HepG2 (cell line): ENCODE measurements at regions of chr9 and their contacts with region 1.

Region 1: GRCh38 chr9:32384364-32385151 is at the start of gene ACO1:
- DNase-seq: peak; percentile 80
- ATAC-seq: peak; percentile 94
- H3K4me3 ChIP-seq: peak within 1 kb of the TSS; percentile 79 to 98 (median 95)
- H3K27ac ChIP-seq: peak within 1 kb of the TSS; percentile 81
- H3K4me1 ChIP-seq: peaks cover 39% of the 10 kb centered on the region
- H3K27me3 ChIP-seq: no peaks in the 10 kb centered on the region; a peak in 1 of 5 replicates
- CTCF ChIP-seq: peak; percentile 55
- EP300 ChIP-seq: peak in 1 of 2 experiments; percentile 45; a peak in 1 of 4 replicates
- POLR2A ChIP-seq: peak; percentile 57 to 87; a peak in 3 of 4 replicates
- RAD21 ChIP-seq: peak; percentile 26; the same call in 1 of the 2 replicates
- total RNA-seq, gene ACO1: 48.2 and 68.9 TPM in 2 replicates

Region 2: GRCh38 chr9:32426278-32426939 is 41.9 kb after region 1 on chr9:
- CTCF ChIA-PET with region 1: interaction called, 68 read pairs
- POLR2A ChIA-PET with region 1: interaction called, 20 read pairs
- in situ Hi-C with region 1: loop called (anchors 5 kb)
- intact Hi-C with region 1: loop called (anchors 1 kb)
- DNase-seq: peak; percentile 92
- ATAC-seq: peak; percentile 96
- H3K4me3 ChIP-seq: peak overlapping the region in 2 of 3 experiments; percentile 25 to 40; a peak in 2 of 6 replicates
- H3K27ac ChIP-seq: peak overlapping the region; percentile 88
- H3K4me1 ChIP-seq: peaks cover 53% of the 10 kb centered on the region
- H3K27me3 ChIP-seq: no peaks in the 10 kb centered on the region
- CTCF ChIP-seq: no peak
- EP300 ChIP-seq: peak in 1 of 2 experiments; percentile 81; a peak in 3 of 4 replicates
- POLR2A ChIP-seq: peak in 1 of 2 experiments; percentile 27; a peak in 1 of 4 replicates
- RAD21 ChIP-seq: no peak

Region 3: DNA sequence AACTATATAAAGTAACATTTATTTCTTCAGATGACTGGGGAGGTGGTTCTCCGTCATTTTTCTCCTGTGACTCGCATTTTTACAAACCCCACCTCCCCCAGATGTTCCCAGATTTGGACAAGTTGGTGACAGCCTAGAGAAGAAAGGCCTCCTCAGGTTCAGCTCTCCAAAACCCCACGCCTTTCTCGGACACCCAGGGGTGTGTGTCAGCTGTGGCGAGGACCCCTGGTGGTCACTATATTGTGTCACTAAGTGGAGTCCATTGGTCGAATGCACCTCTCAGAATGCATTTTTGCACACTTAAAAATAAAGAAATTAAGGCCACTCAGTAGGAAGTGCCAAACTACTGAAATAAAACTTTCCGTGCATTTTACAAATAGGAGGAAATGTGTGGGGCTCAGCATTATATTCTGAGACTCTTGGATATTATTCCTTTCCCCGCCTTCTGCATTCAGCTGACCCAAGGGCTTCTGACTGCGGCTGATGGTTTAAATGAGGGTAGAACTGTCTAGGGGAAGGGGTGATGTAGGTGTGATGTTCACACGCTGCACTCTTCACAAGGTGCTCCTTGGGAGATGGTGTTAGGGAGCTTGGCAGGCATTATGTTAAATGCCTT is 47.5 kb after region 1 on chr9:
- CTCF ChIA-PET with region 1: interaction called, 68 read pairs
- POLR2A ChIA-PET with region 1: interaction called, 20 read pairs
- in situ Hi-C with region 1: loop called (anchors 5 kb)
- intact Hi-C with region 1: loop called (anchors 1 kb)
- DNase-seq: peak; percentile 33
- ATAC-seq: peak; percentile 93
- H3K4me3 ChIP-seq: no peak overlapping the region
- H3K27ac ChIP-seq: no peak overlapping the region
- H3K4me1 ChIP-seq: peaks cover 12% of the 10 kb centered on the region
- H3K27me3 ChIP-seq: no peaks in the 10 kb centered on the region
- CTCF ChIP-seq: peak; percentile 72
- EP300 ChIP-seq: no peak
- POLR2A ChIP-seq: no peak
- RAD21 ChIP-seq: peak; percentile 57

Region 4: DNA sequence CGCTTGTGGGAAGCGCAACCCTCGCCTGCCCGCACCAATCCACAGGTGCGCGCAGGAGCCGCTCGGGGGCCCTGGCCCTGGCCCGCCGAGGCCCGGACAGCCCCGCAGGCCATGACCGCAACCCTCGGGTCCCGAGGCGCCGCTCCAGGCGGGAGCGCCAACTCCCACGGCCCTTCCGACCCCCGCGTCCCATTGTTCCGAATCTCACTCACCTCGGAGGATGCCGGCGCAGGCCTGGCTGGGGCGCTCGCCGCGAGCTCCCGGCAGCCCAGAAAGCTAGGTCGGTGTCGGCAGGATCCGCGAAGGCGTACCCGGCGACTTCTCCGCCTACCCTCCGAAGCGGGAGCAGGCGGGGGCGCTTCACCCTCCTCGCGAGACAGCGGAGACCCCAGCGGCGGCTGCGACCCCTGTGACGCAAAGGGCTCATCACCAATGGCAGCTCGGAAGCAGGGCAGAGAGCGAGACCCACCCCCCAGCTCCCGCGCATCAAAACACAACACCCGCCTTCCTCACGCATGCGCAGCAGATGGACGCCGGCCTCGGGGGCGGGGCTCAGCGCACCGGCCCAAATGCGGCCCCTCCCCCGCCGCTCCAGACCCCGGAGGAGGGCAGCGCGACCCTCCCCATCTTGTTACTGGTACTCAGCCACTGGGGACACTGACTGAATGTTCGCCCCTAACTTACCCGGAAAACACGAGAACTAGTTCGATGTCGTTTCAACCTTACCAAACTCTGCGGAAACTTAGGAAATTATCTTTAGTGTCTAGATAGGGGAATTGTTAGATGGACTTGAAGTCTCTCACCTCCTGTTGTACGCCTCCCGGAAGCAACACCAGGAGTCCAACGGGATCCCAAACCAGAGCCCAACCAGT is 166.2 kb after region 1 on chr9:
- CTCF ChIA-PET with region 1: no interaction called
- POLR2A ChIA-PET with region 1: interaction called, 30 read pairs
- in situ Hi-C with region 1: no loop called
- intact Hi-C with region 1: no loop called
- DNase-seq: peak; percentile 93
- ATAC-seq: peak; percentile 89
- H3K4me3 ChIP-seq: peak overlapping the region; percentile 89 to 91 (median 90)
- H3K27ac ChIP-seq: peak overlapping the region; percentile 96
- H3K4me1 ChIP-seq: peaks cover 34% of the 10 kb centered on the region
- H3K27me3 ChIP-seq: no peaks in the 10 kb centered on the region; a peak in 1 of 5 replicates
- CTCF ChIP-seq: peak; percentile 39
- EP300 ChIP-seq: no peak; a peak in 1 of 4 replicates
- POLR2A ChIP-seq: peak; percentile 56 to 63
- RAD21 ChIP-seq: peak; percentile 67

Region 5: DNA sequence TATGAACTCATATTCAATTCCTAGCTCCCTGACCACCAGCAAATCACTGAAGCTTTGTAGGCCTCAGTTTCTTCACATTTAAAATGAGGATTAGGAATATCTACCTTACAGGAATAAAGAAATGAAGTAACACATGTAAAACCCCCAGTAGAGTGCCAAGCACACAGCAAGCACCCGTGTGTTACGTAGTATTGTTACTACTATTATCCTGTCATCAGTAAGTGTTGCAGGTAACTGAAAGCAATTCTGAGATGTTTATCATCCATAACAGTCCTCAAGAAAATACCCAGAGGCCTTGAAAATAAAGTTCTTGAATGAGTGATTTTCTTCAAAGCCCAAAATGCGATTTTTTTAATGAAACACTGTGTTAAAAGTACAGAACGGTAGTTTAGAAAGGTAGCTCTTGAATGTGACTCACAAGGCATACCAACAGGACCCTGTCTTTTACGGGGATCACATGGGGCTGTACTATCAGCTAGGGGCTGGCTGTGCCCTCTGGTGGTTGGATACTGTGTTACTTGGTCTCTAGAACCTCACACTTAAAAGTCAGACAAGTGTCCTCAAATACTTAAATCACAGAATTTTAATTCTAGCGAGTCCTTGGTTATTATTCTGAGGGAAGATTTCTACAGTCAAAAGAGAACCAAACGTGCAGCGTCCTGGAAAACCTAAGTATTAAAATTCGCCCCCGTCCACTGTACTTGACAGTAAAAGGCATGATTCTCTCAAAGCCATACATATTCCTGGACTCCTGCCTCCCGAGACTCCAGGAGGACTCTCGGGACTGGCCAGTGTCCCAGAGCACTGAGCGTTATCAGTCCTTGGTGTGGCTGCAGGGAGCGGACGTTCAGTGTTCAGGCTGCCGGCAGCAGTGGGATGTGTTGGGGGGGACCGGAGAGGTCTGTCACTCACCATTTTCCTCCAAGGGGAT is 187.7 kb after region 1 on chr9:
- CTCF ChIA-PET with region 1: interaction called, 52 read pairs
- POLR2A ChIA-PET with region 1: interaction called, 22 read pairs
- in situ Hi-C with region 1: loop called (anchors 5 kb)
- intact Hi-C with region 1: loop called (anchors 1 kb)
- DNase-seq: peak; percentile 83
- ATAC-seq: peak; percentile 96
- H3K4me3 ChIP-seq: peak overlapping the region; percentile 81 to 95 (median 83)
- H3K27ac ChIP-seq: peak overlapping the region; percentile 77
- H3K4me1 ChIP-seq: peaks cover 24% of the 10 kb centered on the region
- H3K27me3 ChIP-seq: no peaks in the 10 kb centered on the region; a peak in 1 of 5 replicates
- CTCF ChIP-seq: peak; percentile 78
- EP300 ChIP-seq: no peak
- POLR2A ChIP-seq: no peak
- RAD21 ChIP-seq: peak; percentile 26; the same call in 1 of the 2 replicates